ENCODE measurements at regions of chr4 and their contacts with region 1.

Region 1: DNA sequence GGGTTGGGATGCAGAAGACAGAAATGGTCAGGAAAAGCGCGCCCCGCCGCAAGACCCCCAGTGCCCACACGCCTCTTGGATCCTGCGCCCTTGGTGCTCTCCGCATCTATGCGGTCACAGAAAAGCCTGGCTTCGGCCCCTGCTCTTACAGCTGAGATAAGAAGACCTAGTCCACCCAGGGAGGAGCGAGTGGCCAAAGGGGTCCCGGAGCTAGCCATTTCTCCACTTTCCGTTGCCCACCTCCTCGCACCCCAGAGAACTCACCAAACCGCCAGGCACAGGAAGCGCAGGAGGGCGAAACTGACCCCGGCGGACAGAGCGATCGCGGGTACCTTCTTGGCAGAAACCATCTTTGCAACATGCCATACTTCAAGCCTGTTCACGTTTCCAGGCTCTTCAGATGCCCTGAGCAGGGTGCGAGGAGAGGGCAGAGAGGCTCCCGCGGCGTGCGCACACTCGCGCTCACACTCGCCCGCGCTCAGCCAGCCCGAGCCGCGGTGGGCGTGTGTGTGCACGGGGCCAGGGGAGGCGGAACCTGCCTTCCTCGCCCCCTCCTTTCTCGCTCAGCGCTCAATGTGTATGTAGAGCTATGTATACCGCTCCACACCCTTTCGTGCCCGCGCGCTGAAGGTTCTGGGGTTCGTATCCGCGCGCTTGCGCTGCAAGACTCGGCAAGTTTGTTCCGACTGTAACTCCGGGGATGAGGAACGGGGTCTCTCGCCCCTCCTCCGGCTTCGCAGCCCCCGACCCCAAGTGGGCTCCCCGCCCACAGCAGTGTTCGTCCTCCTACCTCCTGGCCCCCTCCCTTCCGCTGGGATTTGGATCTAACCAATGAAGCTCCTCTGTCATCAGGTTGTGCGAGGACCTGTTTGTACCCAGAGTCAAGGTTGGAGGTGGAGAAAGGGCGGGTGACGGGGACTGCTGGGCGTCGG is at the start of gene GABRA4:
- DNase-seq: peak; percentile 14 to 24
- ATAC-seq: peak; percentile 65 to 90 (median 76)
- H3K4me3 ChIP-seq: peak within 1 kb of the TSS; percentile 3 to 65 (median 54)
- H3K27ac ChIP-seq: peak within 1 kb of the TSS in 9 of 10 donors; percentile 17 to 91 (median 83)
- H3K4me1 ChIP-seq: peaks cover 0 to 9% (median 3%) of the 10 kb centered on the region in 9 donors
- H3K27me3 ChIP-seq: peaks cover 0 to 77% (median 18%) of the 10 kb centered on the region in 7 donors
- CTCF ChIP-seq: no peak
- total RNA-seq, gene GABRA4: 3.3 to 57.1 (median 28.1) TPM

Region 2: DNA sequence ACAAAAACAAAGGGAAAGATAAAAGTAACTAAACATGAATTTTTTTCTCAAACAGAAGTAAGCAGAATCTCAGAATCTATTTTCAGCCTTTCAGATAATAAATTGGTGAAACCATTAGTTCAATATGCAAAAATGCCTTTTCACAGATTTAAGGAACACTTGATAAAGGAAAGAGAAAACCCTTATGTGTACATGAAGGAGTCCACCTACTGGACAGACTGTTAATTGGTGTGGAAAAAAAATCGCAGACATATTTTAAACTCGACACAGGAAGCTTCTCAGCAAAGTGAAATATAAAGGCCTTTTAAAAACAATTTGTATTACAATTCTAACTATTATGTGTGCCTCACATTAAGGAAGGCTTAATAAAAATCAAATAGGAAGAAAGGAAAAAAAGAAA is 106.6 kb before region 1 on chr4:
- intact Hi-C with region 1: no loop called
- DNase-seq: no peak
- ATAC-seq: no peak
- H3K4me3 ChIP-seq: no peak overlapping the region
- H3K27ac ChIP-seq: no peak overlapping the region
- H3K4me1 ChIP-seq: no peaks in the 10 kb centered on the region
- H3K27me3 ChIP-seq: peaks cover 0 to 1% (median 0%) of the 10 kb centered on the region in 7 donors
- CTCF ChIP-seq: peak in 6 of 9 donors; percentile 11 to 41 (median 32)

Region 3: DNA sequence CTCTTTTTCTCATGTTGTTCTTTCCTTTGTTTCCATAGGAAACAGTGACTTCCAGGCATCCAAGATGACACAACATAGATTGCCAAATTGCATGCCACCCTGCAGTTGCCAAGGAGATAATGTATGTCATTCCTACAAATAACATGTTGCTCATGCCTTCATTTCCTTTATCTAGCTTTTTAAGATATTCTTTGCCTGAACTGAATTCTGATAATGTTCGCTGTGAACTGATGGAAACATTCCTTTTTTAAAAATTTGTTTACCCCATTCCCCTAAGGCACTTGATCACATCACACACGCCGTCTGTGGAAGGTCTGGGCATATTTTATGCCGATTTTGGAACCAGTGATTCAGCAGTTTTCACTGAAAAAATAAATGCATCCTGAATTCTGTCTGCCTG is 46.3 kb before region 1 on chr4:
- intact Hi-C with region 1: loop called in 2 of 10 experiments (anchors 5 kb)
- DNase-seq: no peak
- ATAC-seq: peak in 2 of 8 donors; percentile 46 to 49
- H3K4me3 ChIP-seq: no peak overlapping the region
- H3K27ac ChIP-seq: peak overlapping the region in 5 of 10 donors; percentile 49 to 63 (median 61)
- H3K4me1 ChIP-seq: peaks cover 0 to 58% (median 0%) of the 10 kb centered on the region in 9 donors
- H3K27me3 ChIP-seq: no peaks in the 10 kb centered on the region
- CTCF ChIP-seq: no peak

Region 4: DNA sequence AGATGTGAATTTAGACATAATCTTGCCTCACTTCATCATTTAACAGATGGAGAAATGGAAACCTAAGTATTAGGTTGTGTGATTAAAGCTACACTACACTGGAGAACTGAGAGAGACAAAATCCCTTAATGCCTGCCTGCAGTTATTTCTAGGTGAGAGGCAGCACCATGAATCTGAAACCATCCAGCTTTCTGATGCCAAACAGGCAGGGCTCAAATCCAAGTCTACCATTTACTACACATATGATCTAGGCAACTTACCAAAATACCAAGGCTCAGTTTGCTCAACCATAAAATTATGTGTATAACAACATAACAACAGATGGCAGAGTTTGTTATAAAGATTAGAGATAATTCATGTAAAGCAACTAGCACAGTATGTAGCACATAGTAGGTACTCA is 38.7 kb before region 1 on chr4:
- intact Hi-C with region 1: loop called in 2 of 10 experiments (anchors 5 kb)
- DNase-seq: no peak
- ATAC-seq: peak in 2 of 8 donors; percentile 25 to 37
- H3K4me3 ChIP-seq: no peak overlapping the region
- H3K27ac ChIP-seq: no peak overlapping the region
- H3K4me1 ChIP-seq: peaks cover 0 to 26% (median 0%) of the 10 kb centered on the region in 9 donors
- H3K27me3 ChIP-seq: no peaks in the 10 kb centered on the region
- CTCF ChIP-seq: no peak

Region 5: DNA sequence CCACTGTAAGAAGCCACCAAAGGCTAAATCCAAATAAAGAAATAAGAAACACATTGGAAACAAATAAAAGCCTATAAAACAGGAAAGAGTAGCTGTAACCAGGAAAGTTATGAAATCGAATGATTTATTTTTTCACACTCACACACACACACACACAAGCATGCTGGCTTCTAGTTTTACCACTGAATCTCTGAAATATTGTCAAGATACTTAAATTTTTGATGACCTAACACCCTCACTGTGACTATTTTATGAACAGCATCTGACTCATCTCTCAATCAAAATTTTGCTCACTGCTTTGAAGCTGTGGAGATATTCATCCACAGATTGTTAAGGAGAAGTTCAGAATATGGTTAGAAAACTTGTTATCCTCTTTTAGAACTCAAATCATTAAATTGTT is 24.2 kb after region 1 on chr4:
- intact Hi-C with region 1: no loop called
- DNase-seq: no peak
- ATAC-seq: no peak
- H3K4me3 ChIP-seq: no peak overlapping the region
- H3K27ac ChIP-seq: no peak overlapping the region
- H3K4me1 ChIP-seq: no peaks in the 10 kb centered on the region
- H3K27me3 ChIP-seq: no peaks in the 10 kb centered on the region
- CTCF ChIP-seq: no peak

Region 6: DNA sequence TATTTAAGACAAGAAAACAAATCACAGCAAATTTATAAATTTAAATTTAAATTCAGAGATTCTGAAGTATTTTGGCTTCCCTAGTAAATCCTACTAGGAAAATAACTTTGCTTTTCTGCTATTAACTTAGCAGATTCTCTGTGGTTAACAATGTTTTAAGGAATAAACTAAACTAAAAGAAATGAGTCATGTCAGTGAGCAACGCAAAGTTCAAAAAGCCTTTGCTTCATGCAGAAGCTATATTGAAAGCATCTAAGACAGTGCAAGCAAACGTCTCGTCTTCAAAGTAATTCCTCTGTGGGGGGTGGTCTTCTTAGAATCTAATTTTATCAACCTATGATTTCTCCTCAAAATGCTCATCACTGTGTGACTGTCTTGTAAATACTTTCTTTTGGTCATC is 68.1 kb after region 1 on chr4:
- intact Hi-C with region 1: no loop called
- DNase-seq: no peak
- ATAC-seq: no peak
- H3K4me3 ChIP-seq: no peak overlapping the region
- H3K27ac ChIP-seq: no peak overlapping the region
- H3K4me1 ChIP-seq: peaks cover 0 to 7% (median 0%) of the 10 kb centered on the region in 9 donors
- H3K27me3 ChIP-seq: no peaks in the 10 kb centered on the region
- CTCF ChIP-seq: no peak

Measured in heart right ventricle (tissue), 16 donors.